A673 (cell line): ENCODE measurements at regions of chr15 and their contacts with region 1.

Region 1: GRCh38 chr15:70466895-70467529 is 296.3 kb downstream of the UACA start:
- DNase-seq: peak; percentile 73
- H3K4me3 ChIP-seq: no peak overlapping the region
- H3K27ac ChIP-seq: no peak overlapping the region
- H3K4me1 ChIP-seq: no peaks in the 10 kb centered on the region
- H3K27me3 ChIP-seq: no peaks in the 10 kb centered on the region
- CTCF ChIP-seq: peak; percentile 81

Region 2: GRCh38 chr15:69735121-69735520 is 731.9 kb before region 1 on chr15:
- CTCF ChIA-PET with region 1: no interaction called
- POLR2A ChIA-PET with region 1: no interaction called
- intact Hi-C with region 1: loop called (anchors 10 kb)
- DNase-seq: peak; percentile 82
- H3K4me3 ChIP-seq: peak overlapping the region; percentile 13
- H3K27ac ChIP-seq: peak overlapping the region; percentile 20
- H3K4me1 ChIP-seq: peaks cover 21% of the 10 kb centered on the region
- H3K27me3 ChIP-seq: no peaks in the 10 kb centered on the region
- CTCF ChIP-seq: no peak